PC-3 (cell line): ENCODE measurements at regions of chr1 and their contacts with region 1.

Region 1: GRCh38 chr1:165414620-165415019 is 30.3 kb downstream of the RXRG start:
- DNase-seq: no peak
- ATAC-seq: no peak
- H3K4me3 ChIP-seq: no peak overlapping the region
- H3K27ac ChIP-seq: no peak overlapping the region
- H3K4me1 ChIP-seq: no peaks in the 10 kb centered on the region
- H3K27me3 ChIP-seq: peaks cover 86% of the 10 kb centered on the region
- CTCF ChIP-seq: no peak

Region 2: DNA sequence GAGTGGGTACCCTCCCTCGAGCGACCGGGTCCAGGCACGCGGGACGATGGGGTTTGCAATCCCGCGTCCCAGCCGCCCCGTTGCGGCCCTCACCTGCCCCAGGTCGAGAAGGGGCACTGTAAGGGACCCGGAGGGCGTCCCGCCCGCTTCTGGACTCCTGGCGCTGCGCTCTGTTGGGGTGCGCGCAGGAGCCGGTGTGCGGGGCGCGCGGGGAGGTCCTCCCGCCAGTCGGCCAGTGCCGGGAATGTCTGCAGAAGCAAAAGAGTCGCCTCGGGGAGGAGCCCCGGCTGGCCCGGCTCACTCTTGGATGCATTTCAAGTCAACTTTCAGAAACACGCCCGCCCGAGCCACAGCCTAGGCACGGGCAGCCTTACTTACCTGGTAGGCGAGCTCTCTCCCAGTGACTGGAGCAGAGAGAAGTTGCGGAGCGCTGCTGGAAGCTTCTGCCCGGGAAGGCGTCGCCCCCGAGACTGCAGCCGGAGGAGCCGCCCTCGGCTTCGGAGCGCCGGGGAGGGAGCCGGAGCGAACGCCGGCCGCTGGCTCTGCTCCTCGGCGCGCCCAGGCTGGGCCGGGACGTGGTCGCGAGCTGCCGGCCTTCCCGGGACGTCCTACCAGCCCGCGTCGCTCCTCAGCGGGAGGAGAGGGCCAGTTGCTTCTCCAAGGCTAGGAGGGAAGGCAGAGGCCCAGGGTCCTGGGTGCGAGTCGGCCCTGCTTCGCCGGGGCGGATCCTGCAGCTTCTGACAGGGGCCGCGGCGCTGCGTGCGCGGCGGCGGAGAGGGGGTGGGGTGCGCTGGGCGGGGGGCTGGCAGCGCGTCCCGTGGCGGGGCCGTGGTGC is 58.4 kb before region 1 on chr1 and contains the start of gene LMX1A:
- CTCF ChIA-PET with region 1: no interaction called
- POLR2A ChIA-PET with region 1: interaction called, 16 read pairs
- intact Hi-C with region 1: no loop called
- DNase-seq: no peak
- ATAC-seq: peak; percentile 27
- H3K4me3 ChIP-seq: peak within 1 kb of the TSS; percentile 4; the same call in 1 of the 2 replicates
- H3K27ac ChIP-seq: no peak within 1 kb of the TSS
- H3K4me1 ChIP-seq: no peaks in the 10 kb centered on the region
- H3K27me3 ChIP-seq: peaks cover 58% of the 10 kb centered on the region
- CTCF ChIP-seq: no peak
- total RNA-seq, gene LMX1A: not detected in 2 replicates